ENCODE measurements at regions of chr21 and their contacts with region 1.

Region 1: GRCh38 chr21:33266050-33266788 is at the start of gene IL10RB:
- DNase-seq: peak; percentile 56
- H3K4me3 Mint-ChIP-seq: peak within 1 kb of the TSS; percentile 75
- H3K27ac Mint-ChIP-seq: peak within 1 kb of the TSS; percentile 63
- H3K4me1 Mint-ChIP-seq: peaks cover 25% of the 10 kb centered on the region
- H3K27me3 Mint-ChIP-seq: no peaks in the 10 kb centered on the region
- CTCF ChIP-seq: no peak
- total RNA-seq, gene IL10RB: 23.2 and 26.3 TPM in 2 replicates

Region 2: DNA sequence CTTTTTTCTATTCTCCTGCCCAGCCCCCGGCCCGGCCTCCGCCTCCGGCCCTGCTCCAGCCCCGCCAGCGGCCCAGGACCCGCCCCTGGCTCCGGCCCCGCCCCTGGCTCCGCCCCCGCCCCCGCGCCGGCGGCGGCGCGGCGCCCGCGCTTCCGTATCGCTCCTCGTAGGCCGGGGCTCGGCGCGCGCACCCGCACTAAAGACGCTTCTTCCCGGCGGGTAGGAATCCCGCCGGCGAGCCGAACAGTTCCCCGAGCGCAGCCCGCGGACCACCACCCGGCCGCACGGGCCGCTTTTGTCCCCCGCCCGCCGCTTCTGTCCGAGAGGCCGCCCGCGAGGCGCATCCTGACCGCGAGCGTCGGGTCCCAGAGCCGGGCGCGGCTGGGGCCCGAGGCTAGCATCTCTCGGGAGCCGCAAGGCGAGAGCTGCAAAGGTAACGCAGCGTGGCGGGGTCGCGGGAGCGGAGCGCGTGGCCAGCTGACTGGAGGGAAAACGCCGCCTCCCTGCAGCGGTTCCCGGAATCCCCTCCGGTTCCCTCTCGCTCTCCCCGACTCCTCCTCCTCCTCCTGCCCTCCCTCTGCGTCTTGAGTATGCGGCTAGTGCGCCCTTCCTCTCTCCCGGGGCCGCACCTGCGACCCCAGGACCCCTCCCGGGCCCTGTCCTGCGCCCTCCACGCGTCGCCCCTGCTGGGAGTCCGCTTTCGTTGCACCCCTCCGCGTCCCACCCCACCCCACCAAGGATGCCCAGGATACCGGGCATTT is 36.3 kb before region 1 on chr21 and contains the start of gene IFNAR2:
- CTCF ChIA-PET with region 1: interaction called, 5 read pairs
- POLR2A ChIA-PET with region 1: interaction called, 15 read pairs
- intact Hi-C with region 1: no loop called
- DNase-seq: peak; percentile 54
- H3K4me3 Mint-ChIP-seq: peak within 1 kb of the TSS; percentile 82
- H3K27ac Mint-ChIP-seq: no peak within 1 kb of the TSS
- H3K4me1 Mint-ChIP-seq: peaks cover 23% of the 10 kb centered on the region
- H3K27me3 Mint-ChIP-seq: no peaks in the 10 kb centered on the region
- CTCF ChIP-seq: no peak
- total RNA-seq, gene IFNAR2: 7.3 and 8.8 TPM in 2 replicates

Region 3: GRCh38 chr21:33286600-33287456 is 20.6 kb after region 1 on chr21:
- CTCF ChIA-PET with region 1: no interaction called
- POLR2A ChIA-PET with region 1: interaction called, 14 read pairs
- intact Hi-C with region 1: no loop called
- DNase-seq: peak; percentile 92
- H3K4me3 Mint-ChIP-seq: peak overlapping the region; percentile 12
- H3K27ac Mint-ChIP-seq: peak overlapping the region; percentile 96
- H3K4me1 Mint-ChIP-seq: peaks cover 30% of the 10 kb centered on the region
- H3K27me3 Mint-ChIP-seq: no peaks in the 10 kb centered on the region
- CTCF ChIP-seq: no peak